Ascending aorta (tissue), 2 donors: ENCODE measurements at regions of chr17 and their contacts with region 1.

Region 1: DNA sequence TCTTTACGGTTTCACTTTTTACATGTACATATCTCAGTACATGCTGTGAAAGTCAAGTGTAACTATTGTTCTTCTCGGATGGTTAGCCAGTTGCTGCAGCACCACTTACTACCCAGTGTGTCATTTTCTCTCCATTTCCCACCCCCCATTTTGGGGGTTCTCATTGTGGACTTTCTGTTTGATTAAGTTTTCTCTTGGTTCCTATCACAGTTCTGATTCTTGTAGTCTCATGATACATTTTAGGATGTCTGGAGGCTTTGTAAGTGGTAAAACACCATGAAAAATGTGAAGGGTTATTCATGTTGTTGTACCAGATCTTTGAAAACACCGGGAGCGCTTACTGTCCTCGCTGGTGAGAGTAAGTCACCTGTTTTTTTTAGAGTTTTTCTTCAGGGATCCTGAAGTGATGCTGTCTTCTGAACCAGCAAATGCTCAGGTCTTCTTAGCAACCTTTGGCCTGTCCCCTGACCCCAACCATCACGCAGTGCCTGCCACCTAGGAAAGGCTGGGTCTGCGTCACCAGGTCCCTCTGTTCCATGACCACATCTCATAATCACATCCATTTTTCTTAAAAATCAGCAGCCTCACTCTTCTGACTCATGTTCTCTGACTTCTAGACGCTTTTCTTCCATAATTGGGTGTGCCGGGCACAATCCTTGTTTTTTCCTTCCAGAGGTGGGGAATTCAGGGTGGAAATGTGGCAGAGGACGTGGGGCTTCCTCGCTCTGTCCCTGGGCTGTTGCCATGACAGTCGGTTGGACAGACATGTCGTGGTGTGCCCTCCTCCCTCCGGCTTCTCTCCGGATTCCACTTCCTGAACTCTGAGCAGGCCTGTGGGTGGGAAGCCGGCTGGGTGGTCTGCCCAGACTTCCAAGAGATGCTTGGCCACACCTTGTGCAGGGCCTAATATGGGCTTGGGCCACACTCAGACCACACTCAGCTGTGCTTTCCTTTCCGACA is 102.6 kb downstream of the NTN1 start:
- DNase-seq: peak in 1 of 2 donors; percentile 69
- H3K4me3 ChIP-seq: peak overlapping the region in 1 of 2 donors; percentile 26
- H3K27ac ChIP-seq: peak overlapping the region; percentile 46 to 74
- H3K4me1 ChIP-seq: peaks cover 0 to 13% of the 10 kb centered on the region in 2 donors
- H3K27me3 ChIP-seq: no peaks in the 10 kb centered on the region
- CTCF ChIP-seq: no peak

Region 2: GRCh38 chr17:9150446-9151090 is 26.7 kb after region 1 on chr17:
- intact Hi-C with region 1: loop called (anchors 2 kb)
- DNase-seq: no peak
- H3K4me3 ChIP-seq: peak overlapping the region in 1 of 2 donors; percentile 7
- H3K27ac ChIP-seq: peak overlapping the region; percentile 64 to 75
- H3K4me1 ChIP-seq: peaks cover 5 to 28% of the 10 kb centered on the region in 2 donors
- H3K27me3 ChIP-seq: no peaks in the 10 kb centered on the region
- CTCF ChIP-seq: no peak

Region 3: GRCh38 chr17:9177212-9177611 is 53.3 kb after region 1 on chr17:
- intact Hi-C with region 1: no loop called
- DNase-seq: no peak
- H3K4me3 ChIP-seq: no peak overlapping the region
- H3K27ac ChIP-seq: peak overlapping the region; percentile 4 to 33
- H3K4me1 ChIP-seq: peaks cover 0 to 28% of the 10 kb centered on the region in 2 donors
- H3K27me3 ChIP-seq: no peaks in the 10 kb centered on the region
- CTCF ChIP-seq: no peak